WTC11 (cell line): ENCODE measurements at regions of chr6 and their contacts with region 1.

Region 1: DNA sequence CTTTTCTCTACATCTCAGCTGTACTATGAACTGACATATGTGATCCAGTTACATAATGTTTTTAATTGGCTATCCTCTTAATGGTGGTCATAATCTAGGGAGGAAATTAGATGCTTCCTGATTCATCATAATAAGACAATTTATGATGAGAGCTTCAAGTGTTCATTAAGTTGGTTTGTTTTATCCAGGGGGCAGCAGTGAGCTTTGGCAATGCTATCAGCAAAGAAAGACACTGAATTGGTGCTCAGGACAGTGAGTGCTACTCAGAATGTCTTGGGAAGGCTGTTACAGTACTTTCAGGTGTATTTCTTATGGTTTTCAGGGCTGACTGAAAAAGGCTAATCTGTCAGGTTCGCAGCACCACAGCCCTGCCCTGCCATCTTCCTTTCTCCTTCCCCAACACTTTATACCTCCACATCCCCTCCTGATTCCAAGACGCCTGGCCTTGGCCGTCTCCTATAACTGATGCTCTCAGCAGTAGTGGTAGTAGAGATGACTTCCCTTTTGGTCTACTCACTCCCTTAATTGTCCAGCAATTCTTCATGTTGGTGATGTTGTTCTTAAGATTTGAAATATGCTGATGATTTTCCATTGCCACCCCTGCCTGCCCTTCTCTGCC is 67.0 kb upstream of the TNFAIP3 start:
- DNase-seq: no peak
- ATAC-seq: peak; percentile 76
- H3K4me3 Mint-ChIP-seq: no peak overlapping the region
- H3K27ac Mint-ChIP-seq: no peak overlapping the region
- H3K4me1 Mint-ChIP-seq: peaks cover 4% of the 10 kb centered on the region
- H3K27me3 Mint-ChIP-seq: no peaks in the 10 kb centered on the region
- CTCF ChIP-seq: no peak

Region 2: GRCh38 chr6:137536104-137536773 is 263.8 kb before region 1 on chr6:
- CTCF ChIA-PET with region 1: no interaction called
- POLR2A ChIA-PET with region 1: no interaction called
- DNase-seq: no peak
- ATAC-seq: no peak
- H3K4me3 Mint-ChIP-seq: no peak overlapping the region
- H3K27ac Mint-ChIP-seq: no peak overlapping the region
- H3K4me1 Mint-ChIP-seq: peaks cover 8% of the 10 kb centered on the region
- H3K27me3 Mint-ChIP-seq: no peaks in the 10 kb centered on the region; the same call in 1 of the 2 replicates
- CTCF ChIP-seq: no peak

Region 3: GRCh38 chr6:137866914-137867684 is 67.0 kb after region 1 on chr6 and contains the start of gene TNFAIP3:
- CTCF ChIA-PET with region 1: interaction called, 25 read pairs
- POLR2A ChIA-PET with region 1: no interaction called
- DNase-seq: peak; percentile 77
- ATAC-seq: peak; percentile 72
- H3K4me3 Mint-ChIP-seq: peak within 1 kb of the TSS; percentile 87
- H3K27ac Mint-ChIP-seq: 0 out of 2 replicates have a peak within 1 kb of the TSS, but pooled peaks have one; percentile 58
- H3K4me1 Mint-ChIP-seq: peaks cover 44% of the 10 kb centered on the region
- H3K27me3 Mint-ChIP-seq: peaks cover 31% of the 10 kb centered on the region
- CTCF ChIP-seq: peak; percentile 85
- total RNA-seq, gene TNFAIP3: 3.0 to 4.7 TPM (median 4.2 TPM) in 3 replicates

Region 4: DNA sequence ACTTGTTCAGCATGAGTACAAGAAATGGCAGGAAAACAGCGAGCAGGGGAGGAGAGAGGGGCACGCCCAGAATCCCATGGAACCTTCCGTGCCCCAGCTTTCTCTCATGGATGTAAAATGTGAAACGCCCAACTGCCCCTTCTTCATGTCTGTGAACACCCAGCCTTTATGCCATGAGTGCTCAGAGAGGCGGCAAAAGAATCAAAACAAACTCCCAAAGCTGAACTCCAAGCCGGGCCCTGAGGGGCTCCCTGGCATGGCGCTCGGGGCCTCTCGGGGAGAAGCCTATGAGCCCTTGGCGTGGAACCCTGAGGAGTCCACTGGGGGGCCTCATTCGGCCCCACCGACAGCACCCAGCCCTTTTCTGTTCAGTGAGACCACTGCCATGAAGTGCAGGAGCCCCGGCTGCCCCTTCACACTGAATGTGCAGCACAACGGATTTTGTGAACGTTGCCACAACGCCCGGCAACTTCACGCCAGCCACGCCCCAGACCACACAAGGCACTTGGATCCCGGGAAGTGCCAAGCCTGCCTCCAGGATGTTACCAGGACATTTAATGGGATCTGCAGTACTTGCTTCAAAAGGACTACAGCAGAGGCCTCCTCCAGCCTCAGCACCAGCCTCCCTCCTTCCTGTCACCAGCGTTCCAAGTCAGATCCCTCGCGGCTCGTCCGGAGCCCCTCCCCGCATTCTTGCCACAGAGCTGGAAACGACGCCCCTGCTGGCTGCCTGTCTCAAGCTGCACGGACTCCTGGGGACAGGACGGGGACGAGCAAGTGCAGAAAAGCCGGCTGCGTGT is 78.6 kb after region 1 on chr6:
- CTCF ChIA-PET with region 1: interaction called, 10 read pairs
- POLR2A ChIA-PET with region 1: no interaction called
- DNase-seq: peak; percentile 86
- ATAC-seq: peak; percentile 95
- H3K4me3 Mint-ChIP-seq: peak overlapping the region; percentile 41
- H3K27ac Mint-ChIP-seq: no peak overlapping the region
- H3K4me1 Mint-ChIP-seq: peaks cover 42% of the 10 kb centered on the region
- H3K27me3 Mint-ChIP-seq: no peaks in the 10 kb centered on the region
- CTCF ChIP-seq: no peak

Region 5: DNA sequence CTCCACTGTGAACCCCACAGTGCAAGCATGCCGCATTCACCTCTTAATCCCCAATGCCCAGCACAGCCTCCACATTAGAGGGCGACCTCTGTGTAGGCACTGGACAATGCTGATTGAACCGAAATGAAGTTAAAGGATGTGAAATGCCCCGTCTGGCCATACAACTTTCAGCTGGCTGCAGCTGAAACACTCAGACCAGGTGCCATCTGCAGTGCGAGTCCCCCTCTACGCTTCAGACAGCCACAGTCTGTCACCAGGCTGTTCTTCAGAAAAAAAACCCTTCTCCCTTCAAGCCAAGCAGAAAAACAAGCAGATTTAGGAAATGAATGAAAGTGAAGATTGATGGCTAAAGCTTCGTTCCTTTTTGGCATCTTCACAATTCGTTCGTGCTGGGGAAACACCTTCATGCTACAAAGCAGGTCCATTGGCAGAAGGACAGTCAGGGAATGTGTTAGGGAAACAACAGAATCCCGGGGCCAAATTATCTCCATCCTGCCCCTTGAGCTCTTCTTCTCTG is 111.7 kb after region 1 on chr6:
- CTCF ChIA-PET with region 1: no interaction called
- POLR2A ChIA-PET with region 1: no interaction called
- DNase-seq: no peak
- ATAC-seq: no peak
- H3K4me3 Mint-ChIP-seq: no peak overlapping the region
- H3K27ac Mint-ChIP-seq: no peak overlapping the region
- H3K4me1 Mint-ChIP-seq: peaks cover 11% of the 10 kb centered on the region
- H3K27me3 Mint-ChIP-seq: 0 out of 2 replicates have a peak, but pooled peaks cover 5% of the 10 kb centered on the region
- CTCF ChIP-seq: no peak

Region 6: GRCh38 chr6:137938770-137939379 is 138.8 kb after region 1 on chr6:
- CTCF ChIA-PET with region 1: interaction called, 17 read pairs
- POLR2A ChIA-PET with region 1: no interaction called
- DNase-seq: no peak
- ATAC-seq: no peak
- H3K4me3 Mint-ChIP-seq: no peak overlapping the region
- H3K27ac Mint-ChIP-seq: no peak overlapping the region
- H3K4me1 Mint-ChIP-seq: no peaks in the 10 kb centered on the region
- H3K27me3 Mint-ChIP-seq: no peaks in the 10 kb centered on the region
- CTCF ChIP-seq: no peak

Region 7: GRCh38 chr6:138001750-138002349 is 201.8 kb after region 1 on chr6:
- CTCF ChIA-PET with region 1: interaction called, 13 read pairs
- POLR2A ChIA-PET with region 1: no interaction called
- DNase-seq: peak; percentile 63
- ATAC-seq: 0 out of 2 replicates have a peak, but pooled peaks have one; percentile 36
- H3K4me3 Mint-ChIP-seq: no peak overlapping the region
- H3K27ac Mint-ChIP-seq: no peak overlapping the region
- H3K4me1 Mint-ChIP-seq: peaks cover 19% of the 10 kb centered on the region
- H3K27me3 Mint-ChIP-seq: no peaks in the 10 kb centered on the region
- CTCF ChIP-seq: peak; percentile 65